Activated CD4-positive, alpha-beta T cell treated with anti-CD3 and anti-CD28 coated beads, Interleukin-2, amount 10 ng/mL, durations not matched to agents 24 days and 14 days (primary cell): ENCODE measurements at regions of chr1 and their contacts with region 1.

Region 1: GRCh38 chr1:25006770-25007169 is 76.7 kb upstream of the RUNX3 start:
- DNase-seq: no peak
- H3K4me3 Mint-ChIP-seq: no peak overlapping the region
- H3K27ac Mint-ChIP-seq: peak overlapping the region; percentile 19
- H3K4me1 Mint-ChIP-seq: peaks cover 63% of the 10 kb centered on the region
- H3K27me3 Mint-ChIP-seq: no peaks in the 10 kb centered on the region

Region 2: DNA sequence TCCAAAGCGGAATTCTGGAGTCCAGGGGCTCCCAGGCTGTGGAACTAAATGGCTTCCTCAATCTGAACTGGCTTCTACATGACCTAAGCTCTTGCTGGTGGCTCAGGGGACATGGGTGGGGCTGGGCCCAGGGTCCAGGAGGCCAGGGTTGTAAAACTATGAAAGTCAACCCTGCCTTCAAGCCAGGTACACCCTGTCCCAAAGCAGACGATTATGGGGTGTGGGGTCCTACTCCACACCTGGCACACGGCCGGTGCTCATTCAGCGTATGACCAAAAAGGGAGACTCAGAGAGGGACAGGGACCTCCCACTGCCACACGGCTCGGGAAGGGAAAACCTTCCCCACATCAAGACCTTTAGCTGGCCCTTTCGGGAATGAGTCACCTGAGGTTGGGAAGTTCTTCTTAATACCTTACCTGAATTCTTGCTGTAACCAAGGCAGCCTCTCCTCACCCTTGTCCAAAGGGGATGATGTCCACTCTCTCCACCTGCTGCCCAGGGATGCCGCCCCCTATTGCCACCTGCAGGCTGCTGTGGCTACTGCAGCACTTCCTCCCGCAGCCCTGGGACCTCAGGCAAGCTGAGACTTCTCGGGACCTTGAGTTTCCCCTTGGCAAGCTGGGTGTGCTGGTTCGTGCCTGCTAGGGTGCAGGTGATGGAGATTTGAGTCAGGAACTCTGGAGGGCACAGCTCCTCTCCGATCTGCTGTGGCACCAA is 108.8 kb before region 1 on chr1:
- intact Hi-C with region 1: no loop called
- DNase-seq: peak; percentile 83
- H3K4me3 Mint-ChIP-seq: no peak overlapping the region
- H3K27ac Mint-ChIP-seq: peak overlapping the region; percentile 56
- H3K4me1 Mint-ChIP-seq: peaks cover 12% of the 10 kb centered on the region
- H3K27me3 Mint-ChIP-seq: no peaks in the 10 kb centered on the region

Region 3: GRCh38 chr1:24964811-24965570 is 41.8 kb before region 1 on chr1:
- intact Hi-C with region 1: loop called (anchors 2 kb)
- DNase-seq: peak; percentile 98
- H3K4me3 Mint-ChIP-seq: peak overlapping the region; percentile 96
- H3K27ac Mint-ChIP-seq: peak overlapping the region; percentile 97
- H3K4me1 Mint-ChIP-seq: peaks cover 71% of the 10 kb centered on the region
- H3K27me3 Mint-ChIP-seq: no peaks in the 10 kb centered on the region

Region 4: GRCh38 chr1:24990779-24991641 is 15.8 kb before region 1 on chr1:
- intact Hi-C with region 1: loop called (anchors 2 kb)
- DNase-seq: no peak
- H3K4me3 Mint-ChIP-seq: peak overlapping the region; percentile 83
- H3K27ac Mint-ChIP-seq: peak overlapping the region; percentile 100
- H3K4me1 Mint-ChIP-seq: peaks cover 80% of the 10 kb centered on the region
- H3K27me3 Mint-ChIP-seq: no peaks in the 10 kb centered on the region

Region 5: GRCh38 chr1:25442178-25442577 is 435.4 kb after region 1 on chr1:
- intact Hi-C with region 1: no loop called
- DNase-seq: no peak
- H3K4me3 Mint-ChIP-seq: no peak overlapping the region
- H3K27ac Mint-ChIP-seq: no peak overlapping the region
- H3K4me1 Mint-ChIP-seq: peaks cover 25% of the 10 kb centered on the region
- H3K27me3 Mint-ChIP-seq: no peaks in the 10 kb centered on the region